ENCODE measurements at regions of chr16 and their contacts with region 1.

Region 1: GRCh38 chr16:17369421-17370222 is 101.1 kb downstream of the XYLT1 start:
- DNase-seq: peak; percentile 85 to 89 (median 88)
- H3K4me3 ChIP-seq: peak overlapping the region; percentile 26 to 65
- H3K4me3 Mint-ChIP-seq: peak overlapping the region; percentile 89 to 98 (median 92)
- H3K27ac ChIP-seq: peak overlapping the region; percentile 70
- H3K27ac Mint-ChIP-seq: peak overlapping the region; percentile 95 to 100 (median 99)
- H3K4me1 ChIP-seq: peaks cover 100% of the 10 kb centered on the region
- H3K4me1 Mint-ChIP-seq: peaks cover 76 to 97% (median 88%) of the 10 kb centered on the region in 4 donors
- H3K27me3 ChIP-seq: no peaks in the 10 kb centered on the region
- H3K27me3 Mint-ChIP-seq: no peaks in the 10 kb centered on the region

Region 2: GRCh38 chr16:17018585-17018939 is 351.1 kb before region 1 on chr16:
- CTCF ChIA-PET with region 1: no interaction called
- POLR2A ChIA-PET with region 1: no interaction called
- intact Hi-C with region 1: loop called (anchors 10 kb)
- DNase-seq: no peak
- H3K4me3 ChIP-seq: no peak overlapping the region
- H3K4me3 Mint-ChIP-seq: no peak overlapping the region
- H3K27ac ChIP-seq: no peak overlapping the region
- H3K27ac Mint-ChIP-seq: no peak overlapping the region
- H3K4me1 ChIP-seq: peaks cover 9% of the 10 kb centered on the region
- H3K4me1 Mint-ChIP-seq: peaks cover 5 to 19% (median 11%) of the 10 kb centered on the region in 4 donors
- H3K27me3 ChIP-seq: no peaks in the 10 kb centered on the region
- H3K27me3 Mint-ChIP-seq: no peaks in the 10 kb centered on the region

Region 3: DNA sequence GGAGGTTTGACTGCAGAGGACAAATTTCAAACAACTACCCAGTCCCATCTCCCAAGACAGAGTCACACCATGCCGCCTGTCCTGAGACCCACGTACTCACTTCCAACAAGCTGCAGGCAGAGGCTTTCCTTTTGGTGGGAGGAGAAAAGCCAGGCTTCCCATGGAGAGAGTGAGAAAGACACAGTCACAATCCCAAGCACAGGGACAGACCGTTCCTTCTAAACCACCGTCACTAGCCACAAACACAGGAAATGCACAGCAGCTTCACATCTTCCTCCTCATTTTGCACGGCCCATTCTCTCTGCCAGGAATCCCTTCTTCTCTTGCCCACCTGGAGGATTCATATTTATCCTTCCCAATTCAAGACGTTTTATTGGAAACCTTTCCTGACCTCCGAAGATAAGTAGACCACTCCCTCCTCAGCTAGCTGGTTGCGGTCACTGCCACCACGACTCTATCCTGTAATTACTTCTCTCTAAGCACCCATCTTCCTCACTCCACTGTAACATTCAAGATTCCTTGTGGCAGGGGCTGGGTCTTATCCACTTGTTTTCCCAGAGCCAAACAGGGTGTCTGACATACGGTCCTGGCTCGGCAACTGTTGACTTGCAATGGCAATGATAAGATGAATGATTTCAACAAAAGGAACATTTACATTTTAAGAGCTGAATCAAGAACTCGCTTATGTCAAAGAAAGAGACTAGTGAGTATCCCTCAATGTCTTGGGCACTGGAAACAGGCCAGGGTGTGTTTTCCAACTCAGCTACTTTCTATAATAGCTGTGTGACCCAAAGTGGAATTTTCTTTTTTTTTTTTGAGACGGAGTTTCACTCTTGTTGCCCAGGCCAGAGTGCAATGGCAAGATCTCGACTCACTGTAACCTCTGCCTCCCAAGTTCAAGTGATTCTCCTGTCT is 13.6 kb after region 1 on chr16:
- CTCF ChIA-PET with region 1: interaction called, 7 read pairs
- POLR2A ChIA-PET with region 1: interaction called, 26 read pairs
- intact Hi-C with region 1: no loop called
- DNase-seq: no peak
- H3K4me3 ChIP-seq: no peak overlapping the region
- H3K4me3 Mint-ChIP-seq: peak overlapping the region in 7 of 8 donors; percentile 67 to 87 (median 74)
- H3K27ac ChIP-seq: no peak overlapping the region
- H3K27ac Mint-ChIP-seq: peak overlapping the region in 6 of 7 donors; percentile 72 to 96 (median 88)
- H3K4me1 ChIP-seq: peaks cover 55% of the 10 kb centered on the region
- H3K4me1 Mint-ChIP-seq: peaks cover 42 to 87% (median 63%) of the 10 kb centered on the region in 4 donors
- H3K27me3 ChIP-seq: no peaks in the 10 kb centered on the region
- H3K27me3 Mint-ChIP-seq: no peaks in the 10 kb centered on the region

Region 4: GRCh38 chr16:17416461-17417311 is 47.1 kb after region 1 on chr16:
- CTCF ChIA-PET with region 1: interaction called, 38 read pairs
- POLR2A ChIA-PET with region 1: interaction called, 61 read pairs
- intact Hi-C with region 1: loop called (anchors 2 kb)
- DNase-seq: peak; percentile 61 to 69 (median 65)
- H3K4me3 ChIP-seq: peak overlapping the region; percentile 37 to 58
- H3K4me3 Mint-ChIP-seq: peak overlapping the region; percentile 80 to 93 (median 87)
- H3K27ac ChIP-seq: peak overlapping the region; percentile 46
- H3K27ac Mint-ChIP-seq: peak overlapping the region; percentile 82 to 95 (median 92)
- H3K4me1 ChIP-seq: peaks cover 45% of the 10 kb centered on the region
- H3K4me1 Mint-ChIP-seq: peaks cover 41 to 70% (median 60%) of the 10 kb centered on the region in 4 donors
- H3K27me3 ChIP-seq: no peaks in the 10 kb centered on the region
- H3K27me3 Mint-ChIP-seq: no peaks in the 10 kb centered on the region

Region 5: DNA sequence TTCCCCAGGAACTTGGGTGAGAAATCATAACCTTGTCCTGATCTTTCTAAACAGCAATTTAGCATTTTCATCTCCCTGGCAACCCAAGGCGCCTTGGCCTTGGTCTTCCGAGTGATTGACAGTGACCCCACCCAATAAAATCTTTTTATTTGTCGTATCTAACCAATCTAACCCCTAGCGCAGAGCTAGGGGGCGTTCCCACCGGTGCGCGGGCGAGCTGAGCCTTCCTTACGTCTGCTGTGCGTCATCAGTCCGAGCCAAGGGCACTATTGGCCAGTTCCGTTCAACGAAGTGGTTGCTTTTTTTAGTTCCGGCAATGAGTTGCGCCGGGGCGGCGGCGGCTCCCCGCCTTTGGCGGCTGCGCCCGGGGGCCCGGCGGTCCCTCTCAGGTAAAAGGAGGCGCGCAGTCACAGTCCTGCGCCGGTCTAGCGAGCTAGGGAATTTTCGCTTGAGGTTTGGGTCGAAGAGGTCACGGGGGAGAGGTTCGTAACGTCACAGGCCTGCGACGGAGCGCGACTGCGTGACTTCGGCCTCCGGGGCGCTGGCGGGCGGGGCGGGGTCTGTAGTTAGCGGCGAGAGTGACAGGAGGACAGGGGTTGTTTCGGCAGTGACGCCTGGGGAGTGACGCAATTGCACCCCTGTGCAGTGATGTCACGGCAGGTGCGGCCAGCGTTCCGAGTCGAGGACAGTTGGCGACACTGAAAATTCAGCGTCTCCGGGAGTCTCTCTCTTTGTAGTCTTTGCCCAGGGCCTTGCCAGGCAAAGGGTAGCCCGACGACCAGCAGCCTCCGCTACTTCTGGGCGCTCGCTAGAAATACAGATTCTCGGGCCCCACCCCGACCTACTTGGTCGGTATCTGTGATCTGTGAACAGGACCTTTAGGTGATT is 1698.0 kb after region 1 on chr16 and contains the start of gene COQ7:
- CTCF ChIA-PET with region 1: no interaction called
- POLR2A ChIA-PET with region 1: no interaction called
- intact Hi-C with region 1: loop called (anchors 10 kb)
- DNase-seq: peak; percentile 99 to 100 (median 100)
- H3K4me3 ChIP-seq: peak within 1 kb of the TSS; percentile 79 to 99
- H3K4me3 Mint-ChIP-seq: peak within 1 kb of the TSS; percentile 92 to 96 (median 94)
- H3K27ac ChIP-seq: peak within 1 kb of the TSS; percentile 100
- H3K27ac Mint-ChIP-seq: peak within 1 kb of the TSS; percentile 93 to 99 (median 99)
- H3K4me1 ChIP-seq: peaks cover 9% of the 10 kb centered on the region
- H3K4me1 Mint-ChIP-seq: peaks cover 3 to 24% (median 14%) of the 10 kb centered on the region in 4 donors
- H3K27me3 ChIP-seq: no peaks in the 10 kb centered on the region
- H3K27me3 Mint-ChIP-seq: peaks cover 0 to 6% of the 10 kb centered on the region in 2 donors
- total RNA-seq, gene COQ7: 16.2 to 19.2 TPM